HEK293T (cell line): ENCODE measurements at regions of chr17 and their contacts with region 1.

Region 1: DNA sequence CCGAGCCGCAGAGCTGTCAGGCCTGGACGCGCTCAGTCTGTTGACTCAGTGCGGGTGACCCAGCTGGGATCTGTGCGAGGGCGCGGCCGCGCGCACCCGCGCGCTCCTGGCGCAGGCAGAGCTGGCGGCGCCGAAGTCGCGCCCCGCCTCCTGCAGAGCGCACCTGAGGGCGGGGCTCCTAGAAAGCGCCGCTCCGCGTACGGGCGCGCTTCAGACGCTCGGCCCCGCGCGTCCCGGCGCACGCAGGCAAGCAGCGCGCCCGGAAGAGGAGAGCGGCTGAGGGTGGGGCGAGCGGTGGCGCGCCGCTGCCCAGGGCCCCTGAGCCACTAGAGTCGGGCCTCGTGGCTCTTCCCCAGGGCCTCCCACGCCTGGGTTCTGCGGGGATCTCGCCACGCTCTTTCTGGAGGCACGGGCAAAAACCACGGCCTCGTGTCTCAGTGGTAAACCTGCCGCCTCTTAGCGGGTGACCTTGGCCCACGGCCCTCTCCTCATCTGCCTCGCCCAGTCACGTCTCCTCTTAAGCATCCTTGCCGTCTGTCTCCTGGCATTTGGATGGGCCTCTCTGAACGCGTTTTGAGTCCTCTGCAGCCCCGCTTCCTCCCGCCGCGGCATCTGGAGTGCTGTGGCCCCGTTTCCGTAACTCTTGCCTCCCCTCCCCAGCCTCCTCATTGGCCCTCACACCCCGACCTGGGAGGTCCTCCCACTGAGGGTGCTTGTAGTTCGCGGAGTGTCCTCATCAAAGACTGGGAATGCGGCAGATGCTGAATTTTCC is at the start of gene ABCA5:
- DNase-seq: peak; percentile 92

Region 2: DNA sequence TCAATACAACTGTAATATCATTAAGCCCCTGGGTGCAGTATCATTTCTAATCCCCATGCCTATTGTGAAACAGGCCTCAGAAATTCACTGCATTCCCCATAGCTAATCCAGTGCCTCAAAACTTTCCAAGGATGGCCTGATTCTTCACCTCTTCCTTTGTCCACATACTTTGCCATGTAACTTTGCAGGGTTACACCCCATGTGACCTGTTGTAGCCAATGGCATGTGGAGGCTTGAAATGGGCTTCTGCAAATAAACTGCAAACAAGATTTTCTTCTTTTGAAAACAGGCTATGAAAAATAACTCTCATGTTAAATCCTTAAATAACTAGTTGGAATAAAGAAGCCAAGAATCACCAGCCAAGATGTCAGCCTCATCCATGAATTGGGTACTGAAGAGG is 134.5 kb before region 1 on chr17:
- CTCF ChIA-PET with region 1: no interaction called
- POLR2A ChIA-PET with region 1: no interaction called
- DNase-seq: no peak

Region 3: GRCh38 chr17:69314246-69315065 is 12.8 kb before region 1 on chr17:
- CTCF ChIA-PET with region 1: no interaction called
- POLR2A ChIA-PET with region 1: interaction called, 14 read pairs
- DNase-seq: peak; percentile 6

Region 4: DNA sequence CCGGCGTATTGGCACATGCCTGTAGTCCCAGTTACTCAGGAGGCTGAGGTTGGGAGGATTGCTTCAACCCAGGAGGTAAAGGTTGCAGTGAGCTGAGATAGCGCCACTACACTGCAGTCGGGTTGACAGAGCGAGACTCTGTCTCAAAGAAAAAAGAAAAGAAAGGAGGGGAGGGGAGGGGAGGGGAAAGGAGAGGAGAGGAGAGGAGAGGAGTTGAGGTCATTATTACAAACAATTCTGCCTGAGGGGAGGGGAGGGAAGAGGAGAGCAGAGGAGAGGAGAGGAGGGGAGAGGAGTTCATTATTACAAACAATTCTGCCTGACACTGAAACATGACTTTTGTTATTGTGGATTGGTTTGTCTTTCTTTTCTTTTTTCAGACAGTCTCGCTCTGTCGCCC is 19.5 kb after region 1 on chr17:
- CTCF ChIA-PET with region 1: no interaction called
- POLR2A ChIA-PET with region 1: no interaction called
- DNase-seq: no peak

Region 5: GRCh38 chr17:69414408-69415274 is 87.4 kb after region 1 on chr17 and contains the start of gene MAP2K6:
- CTCF ChIA-PET with region 1: no interaction called
- POLR2A ChIA-PET with region 1: interaction called, 15 read pairs
- DNase-seq: peak; percentile 83